CD8-positive, alpha-beta T cell (primary cell): ENCODE measurements at regions of chr16 and their contacts with region 1.

Region 1: DNA sequence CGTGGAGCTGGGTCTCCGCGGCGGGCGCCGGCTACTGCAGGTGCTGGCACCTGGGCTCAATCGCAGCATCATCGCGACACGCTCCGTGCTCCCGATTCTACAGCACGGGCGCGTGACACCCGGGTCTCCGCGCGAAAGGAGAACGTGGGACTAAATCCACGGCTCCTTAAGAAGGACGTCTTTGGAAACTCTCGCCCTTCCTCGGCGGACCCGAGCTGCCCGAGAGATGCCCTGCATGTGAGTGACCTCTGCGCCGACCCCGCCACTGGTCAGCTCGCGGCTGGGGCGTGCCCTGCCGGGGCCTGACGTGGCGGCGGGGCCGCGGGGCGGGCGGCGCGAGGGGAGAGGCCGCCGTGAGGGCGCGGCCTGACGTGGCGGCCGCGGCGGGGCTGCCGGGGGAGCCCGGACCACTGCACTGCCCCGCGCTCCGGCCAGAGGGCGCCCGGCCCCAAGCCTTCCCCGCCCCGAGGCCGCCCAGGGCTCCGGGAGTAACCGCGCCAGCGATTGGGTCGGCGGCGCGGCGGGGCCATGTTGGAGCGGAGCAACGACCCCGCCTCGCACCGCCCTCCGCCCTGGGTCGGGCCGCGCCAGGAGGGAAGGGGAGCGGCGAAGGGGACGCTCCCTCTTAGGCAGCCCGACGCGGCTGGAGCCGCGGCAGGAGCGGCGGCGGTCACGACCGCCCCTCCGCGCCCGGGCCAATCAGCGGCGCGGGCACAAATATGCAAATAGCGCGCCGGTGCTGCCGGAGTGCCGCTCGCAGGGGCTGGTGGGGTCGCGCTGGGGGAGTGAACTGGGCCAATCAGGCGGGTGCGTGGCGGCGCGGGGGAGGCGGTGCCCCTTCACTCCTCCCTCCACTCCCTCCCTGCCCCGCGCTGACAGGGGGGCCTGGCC is 75.6 kb downstream of the CHD9 start:
- DNase-seq: peak; percentile 88 to 97 (median 96)
- ATAC-seq: peak; percentile 91
- H3K4me3 ChIP-seq: peak overlapping the region; percentile 76 to 92
- H3K4me3 Mint-ChIP-seq: peak overlapping the region; percentile 84
- H3K27ac ChIP-seq: peak overlapping the region; percentile 52 to 66
- H3K27ac Mint-ChIP-seq: peak overlapping the region; percentile 86
- H3K4me1 ChIP-seq: no peaks in the 10 kb centered on the region
- H3K4me1 Mint-ChIP-seq: peaks cover 20% of the 10 kb centered on the region
- H3K27me3 ChIP-seq: no peaks in the 10 kb centered on the region
- H3K27me3 Mint-ChIP-seq: no peaks in the 10 kb centered on the region
- CTCF ChIP-seq: no peak

Region 2: GRCh38 chr16:53099318-53100130 is 30.9 kb before region 1 on chr16:
- CTCF ChIA-PET with region 1: interaction called, 3 read pairs
- POLR2A ChIA-PET with region 1: no interaction called
- intact Hi-C with region 1: loop called (anchors 2 kb)
- DNase-seq: peak; percentile 1 to 80 (median 58)
- ATAC-seq: peak; percentile 65
- H3K4me3 ChIP-seq: peak overlapping the region; percentile 40 to 64
- H3K4me3 Mint-ChIP-seq: peak overlapping the region; percentile 78
- H3K27ac ChIP-seq: peak overlapping the region; percentile 45 to 63
- H3K27ac Mint-ChIP-seq: peak overlapping the region; percentile 91
- H3K4me1 ChIP-seq: peaks cover 21% of the 10 kb centered on the region
- H3K4me1 Mint-ChIP-seq: peaks cover 26% of the 10 kb centered on the region
- H3K27me3 ChIP-seq: no peaks in the 10 kb centered on the region
- H3K27me3 Mint-ChIP-seq: no peaks in the 10 kb centered on the region
- CTCF ChIP-seq: no peak

Region 3: GRCh38 chr16:53372992-53373871 is 242.8 kb after region 1 on chr16:
- CTCF ChIA-PET with region 1: no interaction called
- POLR2A ChIA-PET with region 1: no interaction called
- intact Hi-C with region 1: loop called in 1 of 2 experiments (anchors 10 kb)
- DNase-seq: peak; percentile 60 to 88 (median 77)
- ATAC-seq: peak; percentile 96
- H3K4me3 ChIP-seq: peak overlapping the region; percentile 54 to 84
- H3K4me3 Mint-ChIP-seq: no peak overlapping the region
- H3K27ac ChIP-seq: peak overlapping the region in 1 of 2 experiments; percentile 35
- H3K27ac Mint-ChIP-seq: peak overlapping the region; percentile 78
- H3K4me1 ChIP-seq: peaks cover 7% of the 10 kb centered on the region
- H3K4me1 Mint-ChIP-seq: peaks cover 33% of the 10 kb centered on the region
- H3K27me3 ChIP-seq: peaks cover 0 to 3% of the 10 kb centered on the region in 2 experiments
- H3K27me3 Mint-ChIP-seq: peaks cover 6% of the 10 kb centered on the region
- CTCF ChIP-seq: no peak

Region 4: DNA sequence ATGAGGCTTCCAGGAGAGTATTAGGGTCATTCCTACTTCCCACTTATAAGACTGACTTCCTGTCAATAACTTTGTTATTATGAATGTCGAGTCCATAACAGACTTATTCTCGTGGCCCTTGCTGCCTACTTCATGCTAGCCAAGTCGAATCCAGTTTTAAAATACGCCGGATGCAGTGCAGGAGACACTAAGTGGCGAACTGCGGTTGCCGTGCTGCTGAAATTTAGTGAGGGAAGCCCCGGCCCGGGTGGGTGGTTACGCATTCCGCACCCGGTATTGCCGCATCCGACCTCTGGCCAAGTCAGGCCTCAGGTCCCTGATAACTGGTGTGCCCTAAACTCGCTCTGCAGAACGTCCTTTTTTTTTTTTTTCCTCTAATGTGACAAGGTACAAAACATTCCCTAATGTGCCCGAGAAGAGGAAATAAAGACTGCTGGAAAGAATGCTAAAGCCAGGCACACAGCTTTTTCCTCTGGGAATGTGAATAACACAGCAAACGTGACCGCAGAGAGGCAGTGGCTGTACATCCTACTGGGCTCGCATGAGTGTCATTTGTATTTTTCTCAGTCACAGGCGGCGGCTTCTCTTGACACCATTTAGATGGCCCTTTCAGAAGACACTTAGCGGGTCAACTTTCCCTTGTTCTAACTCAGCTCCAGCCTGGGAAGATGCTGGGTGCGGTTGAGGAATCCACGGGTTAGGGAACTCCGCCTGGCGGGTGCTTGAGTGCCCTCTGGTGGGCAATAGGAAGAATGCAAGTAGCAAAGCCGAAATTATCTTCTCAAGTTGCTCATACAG is 379.7 kb after region 1 on chr16:
- CTCF ChIA-PET with region 1: interaction called, 3 read pairs
- POLR2A ChIA-PET with region 1: no interaction called
- intact Hi-C with region 1: loop called in 1 of 2 experiments (anchors 1 kb)
- DNase-seq: peak in 8 of 9 experiments; percentile 31 to 80 (median 54)
- ATAC-seq: peak; percentile 78
- H3K4me3 ChIP-seq: peak overlapping the region; percentile 14 to 41
- H3K4me3 Mint-ChIP-seq: peak overlapping the region; percentile 58
- H3K27ac ChIP-seq: no peak overlapping the region
- H3K27ac Mint-ChIP-seq: no peak overlapping the region
- H3K4me1 ChIP-seq: peaks cover 17% of the 10 kb centered on the region
- H3K4me1 Mint-ChIP-seq: peaks cover 39% of the 10 kb centered on the region
- H3K27me3 ChIP-seq: no peaks in the 10 kb centered on the region
- H3K27me3 Mint-ChIP-seq: no peaks in the 10 kb centered on the region
- CTCF ChIP-seq: peak; percentile 98

Region 5: DNA sequence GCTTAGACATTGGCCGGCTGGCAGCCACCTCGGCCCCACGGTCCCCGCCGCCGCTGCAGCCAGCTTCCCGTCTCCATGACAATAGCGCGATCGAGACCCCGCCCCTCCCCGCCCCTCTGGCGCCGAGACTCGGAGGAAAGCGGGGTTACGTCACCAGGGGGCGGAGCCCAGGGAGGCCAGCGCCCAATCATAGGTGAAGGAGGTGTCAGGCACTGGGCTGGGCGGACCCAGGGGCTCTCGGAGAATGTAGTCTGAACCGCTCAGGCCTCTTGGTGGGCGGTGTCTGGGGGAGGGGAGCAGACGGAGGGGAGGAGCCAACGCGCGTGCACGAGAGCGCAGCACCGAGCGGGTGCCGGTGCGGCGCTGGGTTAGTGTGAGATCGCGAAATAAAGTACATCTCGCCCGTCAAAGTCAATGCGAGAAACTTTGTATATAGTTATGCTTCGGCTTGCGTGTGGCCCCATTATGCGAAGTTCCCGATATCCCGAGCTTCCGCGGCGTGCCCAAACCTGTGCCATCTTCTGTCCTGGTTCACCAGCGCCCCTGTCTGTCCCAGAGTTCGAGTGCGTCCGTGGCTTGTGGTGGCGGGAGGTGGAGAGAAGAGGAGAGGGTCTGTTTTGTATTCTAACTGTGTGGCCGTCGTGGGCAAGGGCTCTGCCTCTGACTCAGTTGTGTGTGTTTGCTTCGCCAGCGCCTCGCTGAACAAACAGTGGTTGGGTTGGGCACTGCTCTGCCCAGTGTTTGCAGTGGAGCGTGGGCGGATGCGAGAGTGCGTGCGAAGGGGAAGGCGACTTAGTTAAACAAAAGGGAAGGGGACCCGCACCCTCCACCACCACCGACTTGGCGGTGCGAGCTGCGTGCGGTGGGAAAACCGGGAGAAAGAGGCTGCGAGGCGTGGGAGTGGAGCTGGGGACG is 1798.9 kb after region 1 on chr16:
- CTCF ChIA-PET with region 1: no interaction called
- POLR2A ChIA-PET with region 1: no interaction called
- intact Hi-C with region 1: loop called in 1 of 2 experiments (anchors 10 kb)
- DNase-seq: peak; percentile 82 to 95 (median 91)
- ATAC-seq: peak; percentile 96
- H3K4me3 ChIP-seq: peak overlapping the region; percentile 46 to 48
- H3K4me3 Mint-ChIP-seq: peak overlapping the region; percentile 90
- H3K27ac ChIP-seq: no peak overlapping the region
- H3K27ac Mint-ChIP-seq: peak overlapping the region; percentile 64
- H3K4me1 ChIP-seq: peaks cover 28% of the 10 kb centered on the region
- H3K4me1 Mint-ChIP-seq: peaks cover 33% of the 10 kb centered on the region
- H3K27me3 ChIP-seq: peaks cover 38 to 51% of the 10 kb centered on the region in 2 experiments
- H3K27me3 Mint-ChIP-seq: peaks cover 61% of the 10 kb centered on the region
- CTCF ChIP-seq: no peak